Mammary epithelial cell (primary cell): ENCODE measurements at regions of chr14 and their contacts with region 1.

Region 1: GRCh38 chr14:86902176-86902950 is 1090.6 kb downstream of the GALC start:
- DNase-seq: no peak
- H3K4me3 ChIP-seq: no peak overlapping the region
- H3K27ac ChIP-seq: no peak overlapping the region
- H3K4me1 ChIP-seq: no peaks in the 10 kb centered on the region
- H3K27me3 ChIP-seq: no peaks in the 10 kb centered on the region
- CTCF ChIP-seq: no peak

Region 2: DNA sequence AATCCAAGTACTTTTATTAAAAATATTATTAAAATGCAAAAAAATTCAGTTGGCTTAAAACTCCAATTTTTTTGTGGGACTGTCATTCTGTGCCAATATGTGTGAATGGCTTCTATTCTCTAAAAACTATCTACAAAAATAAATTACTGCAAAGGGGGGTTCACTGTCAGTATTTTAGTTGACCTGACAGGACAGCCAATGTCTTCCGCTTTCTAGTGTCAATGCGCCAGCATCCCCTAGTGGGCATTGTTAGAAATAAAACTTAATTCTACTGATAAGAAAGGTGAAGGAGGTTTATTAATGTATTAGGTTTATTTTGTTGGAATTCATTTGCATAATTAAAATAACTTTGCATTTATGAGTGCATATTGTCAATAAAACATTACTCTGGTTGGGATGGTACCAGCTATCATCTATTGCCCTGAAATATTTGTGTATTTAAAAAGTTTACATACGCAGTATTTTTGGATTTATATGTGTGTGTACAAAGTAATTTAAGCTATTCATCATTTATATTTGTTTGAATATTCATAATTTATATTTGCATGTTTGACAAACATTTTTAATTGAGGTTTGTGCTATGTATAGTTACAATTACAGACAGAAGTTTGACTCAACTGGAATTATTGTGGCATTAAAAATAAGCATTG is 845.2 kb before region 1 on chr14:
- CTCF ChIA-PET with region 1: no interaction called
- dilution Hi-C with region 1: no loop called
- in situ Hi-C with region 1: no loop called
- intact Hi-C with region 1: loop called (anchors 10 kb)
- DNase-seq: no peak
- H3K4me3 ChIP-seq: no peak overlapping the region
- H3K27ac ChIP-seq: no peak overlapping the region
- H3K4me1 ChIP-seq: no peaks in the 10 kb centered on the region
- H3K27me3 ChIP-seq: no peaks in the 10 kb centered on the region
- CTCF ChIP-seq: peak; percentile 85 to 87

Region 3: DNA sequence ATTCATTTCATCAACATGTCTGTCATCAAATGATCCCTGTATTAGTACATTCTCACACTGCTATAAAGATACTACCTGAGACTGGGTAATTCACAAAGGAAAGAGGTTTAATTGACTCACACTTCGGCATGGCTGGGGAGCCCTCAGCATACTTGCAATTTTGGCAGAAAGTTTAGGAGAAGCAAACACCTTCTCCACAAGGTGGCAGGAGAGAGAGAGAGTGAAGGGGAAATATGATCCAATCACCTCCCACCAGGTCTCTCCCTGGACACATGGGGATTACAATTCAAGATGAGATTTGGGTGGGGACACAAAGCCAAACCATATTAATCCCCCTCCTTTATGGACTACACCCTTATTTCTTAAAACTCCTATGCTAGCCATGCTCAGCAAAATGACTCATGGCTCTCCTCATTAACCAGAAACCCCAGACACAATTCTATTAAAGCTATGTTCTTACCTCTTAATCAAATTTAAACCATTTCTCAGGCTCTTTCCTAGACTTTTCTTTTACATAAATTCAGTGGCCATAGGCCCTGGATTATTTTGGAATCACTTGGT is 440.1 kb before region 1 on chr14:
- CTCF ChIA-PET with region 1: interaction called, 3 read pairs
- dilution Hi-C with region 1: no loop called
- in situ Hi-C with region 1: no loop called
- intact Hi-C with region 1: loop called (anchors 1 kb)
- DNase-seq: peak; percentile 26
- H3K4me3 ChIP-seq: no peak overlapping the region
- H3K27ac ChIP-seq: no peak overlapping the region
- H3K4me1 ChIP-seq: no peaks in the 10 kb centered on the region
- H3K27me3 ChIP-seq: no peaks in the 10 kb centered on the region
- CTCF ChIP-seq: peak; percentile 21 to 62

Region 4: DNA sequence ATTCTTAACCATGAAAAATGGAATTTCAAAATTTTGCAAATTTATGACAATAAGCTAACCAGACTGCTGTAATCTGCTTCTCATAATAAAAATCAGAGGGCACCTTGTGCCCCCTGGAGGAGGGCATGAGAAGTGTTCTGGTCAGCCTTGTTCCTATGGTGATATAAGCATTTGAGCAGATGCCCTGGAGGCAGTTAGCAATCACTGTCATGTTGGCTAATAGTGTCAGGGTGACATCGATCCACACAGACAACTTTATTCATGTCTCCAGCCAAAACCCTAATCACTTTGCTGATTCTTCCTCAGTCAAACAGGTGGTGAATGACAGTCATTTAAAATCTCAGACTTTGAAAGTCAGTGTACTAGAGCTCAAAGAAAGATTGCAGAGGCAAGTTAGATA is 147.6 kb after region 1 on chr14:
- CTCF ChIA-PET with region 1: no interaction called
- dilution Hi-C with region 1: no loop called
- in situ Hi-C with region 1: no loop called
- intact Hi-C with region 1: loop called (anchors 2 kb)
- DNase-seq: peak; percentile 75
- H3K4me3 ChIP-seq: no peak overlapping the region
- H3K27ac ChIP-seq: no peak overlapping the region
- H3K4me1 ChIP-seq: peaks cover 6% of the 10 kb centered on the region
- H3K27me3 ChIP-seq: no peaks in the 10 kb centered on the region
- CTCF ChIP-seq: peak; percentile 82 to 86